ENCODE measurements at regions of chr19 and their contacts with region 1.

Region 1: DNA sequence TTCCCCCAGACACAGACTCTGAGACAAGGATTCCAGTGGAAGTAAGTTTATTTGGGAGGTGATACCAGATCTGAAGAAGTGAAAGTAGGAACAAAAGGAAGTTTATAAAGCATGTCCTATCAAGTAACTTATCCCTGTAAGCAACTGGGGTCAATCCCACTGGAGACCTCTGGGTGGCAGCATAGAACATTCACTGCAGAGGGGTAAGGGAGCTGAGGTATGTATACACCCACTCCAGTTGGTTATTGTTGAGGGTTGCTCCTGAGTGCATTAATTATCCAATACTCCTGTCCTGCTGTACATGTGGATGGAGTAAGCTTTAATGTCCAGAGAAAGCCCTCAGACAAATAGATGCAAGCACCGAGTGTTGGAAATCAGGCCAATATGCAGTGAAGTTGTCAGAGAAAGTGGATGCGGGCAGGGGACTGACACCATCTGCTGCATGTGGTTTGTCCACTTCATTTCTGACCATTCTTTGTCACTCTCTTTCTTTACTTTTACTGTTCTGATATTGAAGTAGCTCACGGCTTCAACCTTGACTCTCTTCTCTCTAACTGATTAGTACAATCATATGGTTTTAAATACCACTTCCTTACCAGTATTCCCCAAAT is 46.7 kb downstream of the NOTCH3 start:
- DNase-seq: peak; percentile 68
- ATAC-seq: peak; percentile 71
- H3K4me3 Mint-ChIP-seq: no peak overlapping the region
- H3K27ac Mint-ChIP-seq: no peak overlapping the region
- H3K4me1 Mint-ChIP-seq: peaks cover 5% of the 10 kb centered on the region
- H3K27me3 Mint-ChIP-seq: peaks cover 11% of the 10 kb centered on the region
- CTCF ChIP-seq: peak; percentile 66

Region 2: GRCh38 chr19:15091901-15092753 is 62.0 kb before region 1 on chr19:
- CTCF ChIA-PET with region 1: interaction called, 66 read pairs
- POLR2A ChIA-PET with region 1: no interaction called
- intact Hi-C with region 1: loop called (anchors 1 kb)
- DNase-seq: peak; percentile 60
- ATAC-seq: peak; percentile 60
- H3K4me3 Mint-ChIP-seq: no peak overlapping the region
- H3K27ac Mint-ChIP-seq: no peak overlapping the region
- H3K4me1 Mint-ChIP-seq: peaks cover 4% of the 10 kb centered on the region
- H3K27me3 Mint-ChIP-seq: peaks cover 8% of the 10 kb centered on the region
- CTCF ChIP-seq: peak; percentile 77

Region 3: DNA sequence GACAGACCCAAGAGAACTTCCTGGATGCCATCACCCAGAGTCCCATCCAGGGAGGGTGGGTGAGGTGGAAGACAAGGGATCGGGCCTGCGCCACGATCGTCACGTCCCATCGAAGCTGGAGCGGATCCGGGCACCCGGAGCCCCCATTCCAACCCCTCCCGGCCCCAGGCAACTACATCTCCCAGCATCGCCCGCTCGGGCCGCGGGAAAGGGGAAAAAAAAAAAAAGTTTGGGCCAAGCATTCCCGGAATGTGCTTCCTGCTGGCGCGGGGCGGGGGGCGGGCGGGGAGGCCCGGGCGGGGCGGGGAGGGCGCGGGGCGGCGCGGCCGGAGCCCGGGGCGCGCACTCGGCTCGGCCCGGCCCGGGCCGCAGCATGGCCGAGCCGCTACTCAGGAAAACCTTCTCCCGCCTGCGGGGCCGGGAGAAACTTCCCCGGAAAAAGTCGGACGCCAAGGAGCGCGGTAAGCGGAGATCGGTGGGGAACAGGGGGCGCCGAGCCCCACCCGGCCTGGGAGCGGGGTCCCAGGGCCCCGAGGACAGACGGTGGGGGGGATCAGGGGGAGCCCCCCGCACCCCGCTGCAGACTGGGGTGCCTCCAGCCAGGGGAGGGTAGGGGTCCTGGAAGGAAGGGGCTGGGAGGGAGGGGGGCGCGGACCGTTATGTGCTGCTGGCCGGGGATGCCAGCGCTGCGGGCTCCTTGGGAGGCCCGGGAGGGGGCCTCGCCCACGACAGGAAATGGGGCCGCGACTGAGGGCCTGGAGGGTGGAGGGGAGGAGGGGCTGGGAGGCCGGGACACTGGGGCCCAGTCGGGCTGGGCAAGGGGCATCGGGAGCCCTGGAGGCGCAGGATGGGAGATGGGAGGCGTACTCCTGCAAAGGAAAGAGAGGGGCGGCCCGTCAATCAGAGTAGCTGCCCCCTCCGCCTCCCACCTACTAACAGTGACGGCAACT is 46.8 kb before region 1 on chr19 and contains the start of gene SYDE1:
- CTCF ChIA-PET with region 1: interaction called, 88 read pairs
- POLR2A ChIA-PET with region 1: no interaction called
- intact Hi-C with region 1: no loop called
- DNase-seq: peak; percentile 71
- ATAC-seq: peak; percentile 89
- H3K4me3 Mint-ChIP-seq: peak within 1 kb of the TSS; percentile 60
- H3K27ac Mint-ChIP-seq: peak within 1 kb of the TSS; percentile 51
- H3K4me1 Mint-ChIP-seq: peaks cover 13% of the 10 kb centered on the region
- H3K27me3 Mint-ChIP-seq: peaks cover 8% of the 10 kb centered on the region
- CTCF ChIP-seq: no peak
- total RNA-seq, gene SYDE1: 1.1 to 1.8 TPM